ENCODE measurements at regions of chr6 and their contacts with region 1.

Region 1: DNA sequence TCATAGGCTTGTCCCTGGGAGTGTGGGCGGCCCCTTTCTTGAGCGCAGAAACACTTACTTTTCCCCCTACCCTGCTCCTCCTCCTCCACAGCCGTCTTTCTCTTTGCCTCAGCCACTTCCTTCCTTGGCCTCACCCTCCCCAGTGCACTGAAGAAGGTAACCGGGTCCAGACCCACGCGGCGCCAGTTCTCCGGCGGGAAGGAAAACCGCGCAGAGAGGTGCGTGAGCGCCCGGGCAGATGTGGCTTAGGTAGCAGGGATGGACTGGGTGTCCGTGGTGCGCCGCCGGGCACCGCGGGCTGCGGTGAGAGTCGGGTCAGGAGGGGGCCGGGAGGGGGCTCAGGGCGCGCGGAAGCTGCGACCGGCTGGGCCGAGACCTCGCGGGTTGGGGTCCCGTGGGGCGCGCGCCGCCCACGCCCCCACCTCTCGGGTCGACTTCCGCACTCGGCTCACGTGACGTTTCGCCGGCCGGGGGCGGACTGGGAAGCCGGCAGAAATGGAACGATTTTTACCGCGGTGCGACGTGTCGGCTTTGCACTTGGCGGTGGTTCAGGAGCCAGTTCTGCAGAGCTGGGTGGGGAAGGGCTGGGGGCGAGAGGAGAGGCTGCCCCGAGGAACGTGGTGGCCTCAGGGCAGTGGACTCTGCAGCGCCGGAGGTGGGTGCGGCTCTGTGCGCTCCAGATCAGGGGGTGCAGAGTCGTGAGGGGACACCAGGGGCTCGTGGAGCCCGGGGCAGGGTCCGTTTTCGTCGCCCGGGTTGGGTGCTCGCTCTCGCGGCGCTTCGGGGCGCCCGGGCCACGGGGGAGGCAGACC is at the start of gene ABRACL:
- DNase-seq: peak; percentile 82 to 83
- H3K4me3 ChIP-seq: peak within 1 kb of the TSS; percentile 78
- H3K4me3 Mint-ChIP-seq: no peak within 1 kb of the TSS
- H3K27ac Mint-ChIP-seq: peak within 1 kb of the TSS; percentile 84
- H3K4me1 ChIP-seq: peaks cover 2% of the 10 kb centered on the region
- H3K4me1 Mint-ChIP-seq: peaks cover 8% of the 10 kb centered on the region
- H3K27me3 ChIP-seq: no peaks in the 10 kb centered on the region
- H3K27me3 Mint-ChIP-seq: no peaks in the 10 kb centered on the region
- CTCF ChIP-seq: no peak
- total RNA-seq, gene ABRACL: 90.3 and 90.8 TPM in 2 replicates

Region 2: DNA sequence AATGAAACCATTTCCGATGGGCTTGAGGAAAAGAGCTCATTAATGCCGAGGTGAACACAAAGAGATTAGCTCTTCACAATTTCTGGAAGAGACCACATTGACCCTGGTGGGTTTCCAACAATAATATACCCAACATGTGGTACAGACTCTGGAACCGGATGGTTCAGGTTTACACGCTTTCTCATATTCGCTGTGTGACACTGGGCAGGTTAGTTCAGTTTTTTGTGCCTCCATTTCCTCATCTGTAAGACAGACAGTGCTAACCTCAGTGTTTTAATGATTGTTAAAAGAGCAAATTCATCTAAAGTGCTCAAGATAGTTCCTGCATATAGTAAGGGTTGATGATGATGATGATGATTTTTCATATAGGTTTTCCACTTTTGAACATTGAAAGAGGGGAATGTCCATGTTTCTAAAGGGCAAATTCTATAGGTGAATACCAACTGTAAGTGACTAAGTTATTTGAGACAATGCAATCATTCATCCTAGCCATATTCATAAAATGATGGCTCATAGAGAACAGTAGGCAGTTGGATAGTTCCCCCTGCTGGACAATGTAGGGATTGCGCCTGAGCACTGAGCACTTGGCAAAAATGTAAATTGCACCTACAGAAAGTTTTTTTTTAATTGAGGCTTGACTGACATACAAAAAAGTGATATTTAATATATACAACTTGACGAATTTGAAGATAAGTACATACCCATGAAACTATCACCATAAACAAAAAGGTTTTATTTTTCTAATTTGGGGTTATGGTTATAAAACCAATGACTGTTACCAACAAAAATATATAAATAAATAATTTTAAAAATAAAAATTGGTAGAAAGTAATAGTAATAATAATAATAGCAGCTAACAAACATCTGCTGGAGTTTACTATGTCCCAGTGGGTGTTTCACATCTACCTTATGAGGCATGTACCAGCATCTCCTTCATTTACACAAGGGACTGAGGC is 919.5 kb before region 1 on chr6:
- CTCF ChIA-PET with region 1: no interaction called
- POLR2A ChIA-PET with region 1: no interaction called
- intact Hi-C with region 1: loop called (anchors 5 kb)
- DNase-seq: peak; percentile 55 to 74
- H3K4me3 ChIP-seq: no peak overlapping the region
- H3K4me3 Mint-ChIP-seq: peak overlapping the region; percentile 55
- H3K27ac Mint-ChIP-seq: peak overlapping the region; percentile 33
- H3K4me1 ChIP-seq: peaks cover 8% of the 10 kb centered on the region
- H3K4me1 Mint-ChIP-seq: peaks cover 6% of the 10 kb centered on the region
- H3K27me3 ChIP-seq: no peaks in the 10 kb centered on the region
- H3K27me3 Mint-ChIP-seq: no peaks in the 10 kb centered on the region
- CTCF ChIP-seq: peak; percentile 72 to 84

Region 3: DNA sequence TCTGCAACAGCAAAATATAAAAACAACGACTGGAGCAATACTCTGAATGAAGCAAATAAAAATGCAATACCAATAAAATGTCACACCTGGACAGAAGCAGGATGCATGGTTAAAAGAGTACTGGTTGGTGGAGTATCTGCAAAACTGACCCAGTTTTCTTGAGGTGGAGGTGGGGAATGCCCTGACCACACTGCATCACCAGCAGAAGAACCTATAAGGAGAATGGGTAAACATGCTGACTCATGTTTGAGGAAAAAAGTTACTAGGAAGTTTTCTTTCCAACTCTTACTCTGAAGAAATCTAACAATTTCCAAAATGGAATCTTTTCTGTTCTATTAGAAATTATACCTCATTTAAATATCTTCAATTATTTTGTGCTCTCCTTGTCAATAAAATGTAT is 84.5 kb before region 1 on chr6:
- CTCF ChIA-PET with region 1: no interaction called
- POLR2A ChIA-PET with region 1: no interaction called
- intact Hi-C with region 1: loop called (anchors 5 kb)
- DNase-seq: no peak
- H3K4me3 ChIP-seq: no peak overlapping the region
- H3K4me3 Mint-ChIP-seq: no peak overlapping the region
- H3K27ac Mint-ChIP-seq: no peak overlapping the region
- H3K4me1 ChIP-seq: peaks cover 14% of the 10 kb centered on the region
- H3K4me1 Mint-ChIP-seq: peaks cover 22% of the 10 kb centered on the region
- H3K27me3 ChIP-seq: no peaks in the 10 kb centered on the region
- H3K27me3 Mint-ChIP-seq: no peaks in the 10 kb centered on the region
- CTCF ChIP-seq: no peak

Region 4: DNA sequence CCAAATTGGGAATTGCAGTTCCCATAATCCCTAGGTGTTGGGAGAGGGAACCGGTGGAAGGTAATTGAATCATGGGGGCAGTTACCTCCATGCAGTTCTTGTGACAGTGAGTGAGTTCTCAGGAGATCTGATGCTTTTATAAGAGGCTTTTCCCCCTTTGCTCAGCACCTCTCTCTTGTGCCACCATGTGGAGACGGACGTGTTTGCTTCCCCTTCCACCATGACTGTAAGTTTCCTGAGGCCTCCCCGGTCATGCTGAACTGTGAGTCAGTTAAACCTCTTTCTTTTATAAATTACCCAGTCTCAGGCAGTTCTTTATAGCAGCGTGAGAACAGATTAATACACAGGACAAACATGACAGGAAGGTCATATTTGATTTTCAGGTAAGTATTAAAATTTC is 80.7 kb after region 1 on chr6:
- CTCF ChIA-PET with region 1: no interaction called
- POLR2A ChIA-PET with region 1: no interaction called
- intact Hi-C with region 1: loop called (anchors 1 kb)
- DNase-seq: peak; percentile 58 to 59
- H3K4me3 ChIP-seq: no peak overlapping the region
- H3K4me3 Mint-ChIP-seq: no peak overlapping the region
- H3K27ac Mint-ChIP-seq: peak overlapping the region; percentile 33
- H3K4me1 ChIP-seq: no peaks in the 10 kb centered on the region
- H3K4me1 Mint-ChIP-seq: no peaks in the 10 kb centered on the region
- H3K27me3 ChIP-seq: no peaks in the 10 kb centered on the region
- H3K27me3 Mint-ChIP-seq: no peaks in the 10 kb centered on the region
- CTCF ChIP-seq: peak; percentile 46 to 62